ENCODE measurements at regions of chr1 and their contacts with region 1.

Region 1: GRCh38 chr1:173603056-173603620 is at the start of gene SLC9C2:
- DNase-seq: no peak
- H3K4me3 ChIP-seq: peak within 1 kb of the TSS in 1 of 3 experiments; percentile 17
- H3K27ac ChIP-seq: no peak within 1 kb of the TSS
- H3K4me1 ChIP-seq: peaks cover 12% of the 10 kb centered on the region
- H3K27me3 ChIP-seq: no peaks in the 10 kb centered on the region
- CTCF ChIP-seq: no peak
- total RNA-seq, gene SLC9C2: not detected

Region 2: DNA sequence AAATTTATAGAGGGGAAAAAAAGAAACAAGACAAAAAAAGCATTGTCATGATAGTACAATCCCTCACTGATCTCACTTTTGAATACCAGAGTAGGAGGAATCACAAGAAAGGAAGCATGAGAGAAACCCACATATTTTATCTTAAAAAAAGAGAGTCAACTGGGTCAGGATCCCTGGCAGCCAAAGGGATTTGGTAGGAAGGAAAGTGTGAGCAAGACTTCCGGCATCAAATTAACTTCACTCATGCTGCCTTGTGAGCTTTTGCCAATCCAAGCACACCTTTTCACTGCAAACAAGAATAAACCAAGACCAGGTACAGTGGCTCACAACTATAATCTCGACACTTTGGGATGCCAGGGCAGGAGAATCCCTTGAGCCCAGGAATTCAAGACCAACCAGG is 53.3 kb before region 1 on chr1:
- CTCF ChIA-PET with region 1: no interaction called
- dilution Hi-C with region 1: no loop called
- in situ Hi-C with region 1: no loop called
- intact Hi-C with region 1: loop called (anchors 1 kb)
- DNase-seq: no peak
- H3K4me3 ChIP-seq: no peak overlapping the region
- H3K27ac ChIP-seq: no peak overlapping the region
- H3K4me1 ChIP-seq: peaks cover 12% of the 10 kb centered on the region
- H3K27me3 ChIP-seq: no peaks in the 10 kb centered on the region
- CTCF ChIP-seq: no peak

Region 3: GRCh38 chr1:173867753-173868265 is 264.7 kb after region 1 on chr1 and contains the start of gene GAS5:
- CTCF ChIA-PET with region 1: no interaction called
- dilution Hi-C with region 1: no loop called
- in situ Hi-C with region 1: no loop called
- intact Hi-C with region 1: no loop called
- DNase-seq: peak; percentile 100
- H3K4me3 ChIP-seq: peak within 1 kb of the TSS; percentile 75 to 85 (median 80)
- H3K27ac ChIP-seq: peak within 1 kb of the TSS; percentile 87
- H3K4me1 ChIP-seq: peaks cover 15% of the 10 kb centered on the region
- H3K27me3 ChIP-seq: no peaks in the 10 kb centered on the region
- CTCF ChIP-seq: no peak
- total RNA-seq, gene GAS5: 396 to 722 TPM

Measured in mammary epithelial cell (primary cell).